Esophagus muscularis mucosa (tissue), 4 donors: ENCODE measurements at regions of chr12 and their contacts with region 1.

Region 1: DNA sequence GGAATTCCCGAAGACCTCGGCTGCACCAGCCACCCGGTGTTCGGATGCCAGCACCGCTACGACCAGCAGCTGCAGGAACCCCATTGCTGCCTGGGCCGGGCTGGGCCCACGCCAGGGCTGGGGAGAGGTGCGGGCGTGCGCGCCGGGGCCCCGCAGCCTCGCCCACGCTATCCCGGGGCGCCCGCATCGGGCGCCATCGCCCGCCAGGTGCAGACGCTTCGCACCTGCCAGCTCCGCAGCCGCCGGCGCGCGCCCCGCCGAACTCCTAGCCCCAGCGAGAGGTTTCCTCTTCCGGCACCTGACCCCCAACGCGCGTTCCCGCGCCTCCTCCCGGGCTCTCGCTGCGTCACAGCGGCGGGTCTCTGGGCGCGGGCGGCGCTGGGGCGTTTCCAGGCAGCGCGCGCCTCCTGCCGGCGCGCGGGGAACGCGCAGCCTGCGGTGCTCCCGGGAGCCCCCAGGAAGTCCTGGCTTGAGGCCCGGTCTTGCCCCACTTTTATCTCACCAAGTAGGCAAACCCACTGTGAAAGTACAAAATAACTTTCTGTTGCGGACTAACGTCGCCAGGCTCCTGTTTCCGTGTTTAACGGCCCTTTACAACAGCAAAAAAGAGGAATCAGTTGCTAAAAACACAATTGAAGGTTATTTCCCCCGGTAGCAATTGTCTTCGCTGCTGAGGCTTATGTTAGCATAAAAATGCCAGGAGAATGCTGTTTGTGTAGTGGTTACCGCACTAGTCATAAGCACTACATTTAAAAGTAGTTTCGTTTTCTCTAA is at the start of gene TM7SF3:
- DNase-seq: peak; percentile 95
- H3K4me3 ChIP-seq: peak within 1 kb of the TSS; percentile 82 to 95 (median 92)
- H3K27ac ChIP-seq: peak within 1 kb of the TSS; percentile 86 to 92 (median 88)
- H3K4me1 ChIP-seq: peaks cover 18 to 57% (median 46%) of the 10 kb centered on the region in 4 donors
- H3K27me3 ChIP-seq: no peaks in the 10 kb centered on the region
- CTCF ChIP-seq: peak; percentile 95 to 99 (median 98)
- EP300 ChIP-seq: no peak
- POLR2A ChIP-seq: no peak
- total RNA-seq, gene TM7SF3: 31.8 to 50.7 (median 40.5) TPM

Region 2: DNA sequence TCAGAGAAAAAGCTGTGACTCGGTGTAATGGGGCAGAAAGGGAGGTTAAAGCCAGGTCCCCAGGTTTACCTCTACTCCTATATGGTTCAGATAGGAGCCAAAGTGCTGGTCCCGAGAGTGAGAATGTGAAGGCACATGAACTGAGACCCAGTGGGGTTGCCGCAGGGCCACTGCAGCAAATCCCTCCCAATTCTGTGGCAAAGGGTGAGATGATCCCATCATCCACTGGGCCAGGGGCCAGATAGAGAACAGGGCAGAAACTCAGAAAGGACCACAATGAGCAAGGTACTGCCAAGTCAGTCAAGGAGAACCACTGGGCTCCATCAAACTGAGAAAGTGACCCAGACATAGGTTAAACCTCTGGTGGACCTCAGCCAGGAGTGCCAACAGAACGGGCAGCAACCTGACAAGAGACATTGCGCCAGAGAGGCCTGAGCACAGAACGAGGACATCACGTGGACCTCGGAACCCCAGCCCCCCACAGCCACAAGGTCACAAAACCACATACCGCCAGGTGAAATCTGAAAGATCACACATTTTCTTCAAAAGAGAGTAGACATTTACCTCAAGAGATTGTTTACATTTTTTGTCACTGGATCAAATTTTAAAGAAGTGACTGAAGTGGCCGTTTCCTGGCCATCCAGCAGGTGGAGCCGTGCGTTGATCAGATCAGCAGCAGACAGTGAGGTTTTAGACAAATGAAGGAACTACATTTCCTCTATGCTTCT is 160.8 kb before region 1 on chr12:
- intact Hi-C with region 1: loop called (anchors 10 kb)
- DNase-seq: peak; percentile 91
- H3K4me3 ChIP-seq: no peak overlapping the region
- H3K27ac ChIP-seq: no peak overlapping the region
- H3K4me1 ChIP-seq: peaks cover 0 to 10% (median 3%) of the 10 kb centered on the region in 4 donors
- H3K27me3 ChIP-seq: no peaks in the 10 kb centered on the region
- CTCF ChIP-seq: peak; percentile 85 to 93 (median 86)
- EP300 ChIP-seq: no peak
- POLR2A ChIP-seq: no peak

Region 3: GRCh38 chr12:26937875-26938700 is 76.2 kb before region 1 on chr12 and contains the starts of genes FGFR1OP2 and INTS13:
- intact Hi-C with region 1: loop called (anchors 5 kb)
- DNase-seq: peak; percentile 98
- H3K4me3 ChIP-seq: peak within 1 kb of the TSS; percentile 89 to 96 (median 93)
- H3K27ac ChIP-seq: peak within 1 kb of the TSS; percentile 94 to 97 (median 96)
- H3K4me1 ChIP-seq: peaks cover 40 to 67% (median 63%) of the 10 kb centered on the region in 4 donors
- H3K27me3 ChIP-seq: no peaks in the 10 kb centered on the region
- CTCF ChIP-seq: peak in 1 of 3 experiments; percentile 18
- EP300 ChIP-seq: no peak
- POLR2A ChIP-seq: peak; percentile 95
- total RNA-seq, gene FGFR1OP2: 52.7 to 65.9 (median 59.4) TPM
- total RNA-seq, gene INTS13: 14.2 to 24.9 (median 22.7) TPM

Region 4: DNA sequence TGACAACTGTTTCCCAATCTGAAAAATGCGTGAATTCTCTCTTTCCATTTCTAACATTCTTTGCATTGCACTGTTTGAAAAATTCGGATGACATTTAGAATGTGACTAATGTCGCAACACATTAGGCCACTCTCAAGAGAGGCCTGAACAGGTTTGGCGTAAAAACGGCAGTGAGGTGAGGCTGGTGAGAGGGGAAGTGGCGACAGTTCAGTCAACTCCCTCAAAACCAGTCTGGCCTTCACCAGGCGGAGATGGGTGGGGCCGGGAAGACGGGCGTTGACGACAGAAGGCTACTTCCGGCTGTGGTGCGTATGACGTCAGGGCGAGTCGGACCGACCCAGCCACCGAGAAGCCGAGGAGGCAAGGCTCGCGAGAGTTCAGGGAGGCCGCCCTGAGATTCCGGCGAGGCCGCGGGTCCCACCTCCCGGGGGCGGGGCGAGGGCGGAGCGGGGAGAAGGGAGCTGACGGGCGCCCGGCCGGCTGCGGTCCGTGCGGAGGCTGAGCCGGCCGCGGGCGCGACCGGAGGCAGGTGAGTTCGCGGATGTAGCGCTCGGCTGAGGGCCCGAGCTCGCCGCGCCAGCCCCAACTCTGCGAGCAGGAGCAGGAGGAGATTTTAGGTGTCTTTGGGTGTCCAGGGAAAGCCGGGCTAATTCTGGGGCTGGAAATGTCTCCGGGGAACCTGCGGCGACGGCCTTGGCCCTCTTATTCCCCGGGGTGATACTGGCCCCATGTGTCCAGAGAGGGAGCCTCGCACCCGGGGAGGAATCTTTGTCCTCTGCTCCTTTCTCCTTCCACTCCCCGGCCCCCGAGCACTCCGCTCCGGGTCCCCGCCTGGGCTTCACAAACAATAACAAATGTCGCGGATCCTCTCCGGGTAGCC is 229.8 kb after region 1 on chr12 and contains the start of gene STK38L:
- intact Hi-C with region 1: loop called (anchors 5 kb)
- DNase-seq: peak; percentile 99
- H3K4me3 ChIP-seq: peak within 1 kb of the TSS; percentile 78 to 91 (median 80)
- H3K27ac ChIP-seq: peak within 1 kb of the TSS; percentile 88 to 94 (median 94)
- H3K4me1 ChIP-seq: peaks cover 14 to 43% (median 36%) of the 10 kb centered on the region in 4 donors
- H3K27me3 ChIP-seq: no peaks in the 10 kb centered on the region
- CTCF ChIP-seq: peak; percentile 36 to 42 (median 39)
- EP300 ChIP-seq: peak; percentile 22
- POLR2A ChIP-seq: peak; percentile 92
- total RNA-seq, gene STK38L: 64.6 to 102 (median 82.4) TPM